ENCODE measurements at regions of chr6 and their contacts with region 1.

Region 1: GRCh38 chr6:75243333-75244062 is at the start of gene COX7A2:
- DNase-seq: peak; percentile 93
- ATAC-seq: peak; percentile 97
- H3K4me3 Mint-ChIP-seq: peak within 1 kb of the TSS; percentile 99
- H3K27ac Mint-ChIP-seq: peak within 1 kb of the TSS; percentile 99
- H3K4me1 Mint-ChIP-seq: peaks cover 26% of the 10 kb centered on the region
- H3K27me3 Mint-ChIP-seq: peaks cover 8% of the 10 kb centered on the region
- CTCF ChIP-seq: no peak
- total RNA-seq, gene COX7A2: 481 to 485 TPM

Region 2: GRCh38 chr6:75044846-75045245 is 198.7 kb before region 1 on chr6:
- CTCF ChIA-PET with region 1: no interaction called
- POLR2A ChIA-PET with region 1: no interaction called
- intact Hi-C with region 1: no loop called
- DNase-seq: no peak
- ATAC-seq: no peak
- H3K4me3 Mint-ChIP-seq: no peak overlapping the region
- H3K27ac Mint-ChIP-seq: no peak overlapping the region
- H3K4me1 Mint-ChIP-seq: no peaks in the 10 kb centered on the region
- H3K27me3 Mint-ChIP-seq: no peaks in the 10 kb centered on the region
- CTCF ChIP-seq: no peak

Region 3: DNA sequence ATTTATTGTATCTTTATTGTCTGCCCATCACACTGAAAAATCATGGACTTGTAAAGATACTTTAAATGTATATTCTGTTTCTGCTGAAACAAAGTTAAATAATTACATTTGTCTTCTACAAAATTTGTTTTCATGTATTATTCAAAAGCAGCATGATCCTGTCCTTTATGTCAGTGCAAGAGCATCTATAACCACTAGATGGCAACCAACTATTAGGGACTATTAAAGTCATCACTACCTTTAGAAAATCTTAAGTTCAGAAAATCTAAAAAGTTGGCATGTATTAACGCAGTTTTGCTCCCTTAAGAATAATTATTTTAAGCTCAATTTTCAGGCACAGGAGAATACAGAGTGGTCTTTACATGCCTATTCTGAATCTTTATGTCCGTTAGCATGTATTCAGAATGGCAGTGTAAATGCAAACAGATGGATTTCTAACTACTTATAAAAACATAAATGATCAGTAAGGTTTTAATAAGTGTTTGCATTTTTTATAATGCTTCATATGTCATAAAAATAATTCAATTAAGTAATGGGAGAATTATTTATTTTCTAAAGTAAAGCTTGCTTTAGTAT is 23.3 kb after region 1 on chr6:
- CTCF ChIA-PET with region 1: interaction called, 12 read pairs
- POLR2A ChIA-PET with region 1: interaction called, 3 read pairs
- intact Hi-C with region 1: no loop called
- DNase-seq: no peak
- ATAC-seq: peak; percentile 64
- H3K4me3 Mint-ChIP-seq: no peak overlapping the region
- H3K27ac Mint-ChIP-seq: no peak overlapping the region
- H3K4me1 Mint-ChIP-seq: peaks cover 38% of the 10 kb centered on the region
- H3K27me3 Mint-ChIP-seq: no peaks in the 10 kb centered on the region
- CTCF ChIP-seq: peak; percentile 83

Region 4: DNA sequence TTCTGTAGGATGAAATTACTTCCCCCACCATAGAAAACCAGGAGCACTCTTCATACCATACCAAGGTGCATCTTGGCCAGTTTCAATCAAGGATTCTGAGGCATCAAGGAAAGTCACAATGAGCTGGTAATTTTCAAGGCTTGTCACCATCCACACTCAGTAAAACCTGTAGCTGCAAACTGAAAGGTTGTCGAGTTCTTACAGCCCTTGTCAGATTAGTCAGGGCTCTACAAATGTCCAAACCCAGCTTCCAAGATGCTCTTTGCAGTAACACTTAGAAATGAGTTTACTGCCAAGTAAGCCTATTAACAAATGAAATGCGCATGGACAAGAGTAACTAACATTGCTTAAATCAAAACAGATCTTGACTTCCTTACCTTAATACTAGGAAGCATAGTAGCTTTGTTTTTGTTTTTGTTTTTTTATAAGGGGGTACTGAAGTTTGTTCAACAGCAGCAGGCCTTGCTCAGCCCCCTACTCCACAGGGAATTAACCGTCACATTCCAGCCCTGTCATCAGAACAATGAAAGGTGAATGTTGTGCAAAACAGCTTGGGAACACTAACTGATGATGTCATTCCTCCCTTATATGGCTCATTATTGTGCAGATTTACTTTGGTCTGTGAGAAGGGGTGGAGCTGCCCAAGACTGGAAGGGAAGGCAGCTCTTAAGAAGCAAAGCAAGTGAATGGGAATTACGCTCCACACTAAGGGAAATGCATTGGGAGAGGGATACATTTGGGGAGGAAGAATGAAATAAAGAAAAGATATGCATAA is 91.0 kb after region 1 on chr6:
- CTCF ChIA-PET with region 1: no interaction called
- POLR2A ChIA-PET with region 1: no interaction called
- intact Hi-C with region 1: no loop called
- DNase-seq: no peak
- ATAC-seq: no peak
- H3K4me3 Mint-ChIP-seq: no peak overlapping the region
- H3K27ac Mint-ChIP-seq: no peak overlapping the region
- H3K4me1 Mint-ChIP-seq: no peaks in the 10 kb centered on the region
- H3K27me3 Mint-ChIP-seq: peaks cover 10% of the 10 kb centered on the region
- CTCF ChIP-seq: no peak

Measured in activated CD8-positive, alpha-beta T cell treated with anti-CD3 and anti-CD28 coated beads for 36 hours (primary cell).